BJ (cell line): ENCODE measurements at regions of chr16 and their contacts with region 1.

Region 1: GRCh38 chr16:30052671-30053372 is 12.7 kb upstream of the ALDOA start:
- DNase-seq: no peak
- H3K4me3 ChIP-seq: peak overlapping the region; percentile 89
- H3K27me3 ChIP-seq: no peaks in the 10 kb centered on the region
- CTCF ChIP-seq: no peak

Region 2: GRCh38 chr16:29757950-29758466 is 294.8 kb before region 1 on chr16:
- CTCF ChIA-PET with region 1: no interaction called
- POLR2A ChIA-PET with region 1: no interaction called
- DNase-seq: peak; percentile 13
- H3K4me3 ChIP-seq: no peak overlapping the region
- H3K27me3 ChIP-seq: no peaks in the 10 kb centered on the region; the same call in 1 of the 2 replicates
- CTCF ChIP-seq: peak; percentile 31; the same call in 1 of the 2 replicates

Region 3: DNA sequence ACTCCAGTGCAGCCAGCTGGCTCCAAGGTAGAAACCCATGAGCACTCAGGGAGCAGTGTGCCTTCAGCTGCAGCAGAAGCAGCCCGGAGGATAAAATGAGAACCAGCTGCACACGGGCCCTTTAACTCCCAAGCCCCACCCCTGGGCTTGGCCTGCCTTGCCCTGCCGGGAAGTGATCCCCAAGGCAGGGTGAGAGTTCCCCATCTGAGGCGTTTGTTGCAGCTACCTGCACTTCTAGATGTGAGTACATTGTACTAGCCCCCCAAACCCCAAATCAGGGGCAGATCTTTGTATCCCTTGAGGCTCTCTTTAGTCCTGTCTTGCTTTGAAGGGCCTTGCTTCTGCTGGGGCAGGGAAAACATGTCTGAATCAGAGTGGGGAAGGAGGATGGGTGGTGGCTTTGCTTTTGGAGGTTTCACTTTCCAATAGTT is 232.5 kb before region 1 on chr16 and contains the start of gene MVP:
- CTCF ChIA-PET with region 1: no interaction called
- POLR2A ChIA-PET with region 1: no interaction called
- DNase-seq: no peak
- H3K4me3 ChIP-seq: peak within 1 kb of the TSS; percentile 80
- H3K27me3 ChIP-seq: no peaks in the 10 kb centered on the region
- CTCF ChIP-seq: no peak
- polyA plus RNA-seq, gene MVP: 219 and 368 TPM in 2 replicates

Region 4: DNA sequence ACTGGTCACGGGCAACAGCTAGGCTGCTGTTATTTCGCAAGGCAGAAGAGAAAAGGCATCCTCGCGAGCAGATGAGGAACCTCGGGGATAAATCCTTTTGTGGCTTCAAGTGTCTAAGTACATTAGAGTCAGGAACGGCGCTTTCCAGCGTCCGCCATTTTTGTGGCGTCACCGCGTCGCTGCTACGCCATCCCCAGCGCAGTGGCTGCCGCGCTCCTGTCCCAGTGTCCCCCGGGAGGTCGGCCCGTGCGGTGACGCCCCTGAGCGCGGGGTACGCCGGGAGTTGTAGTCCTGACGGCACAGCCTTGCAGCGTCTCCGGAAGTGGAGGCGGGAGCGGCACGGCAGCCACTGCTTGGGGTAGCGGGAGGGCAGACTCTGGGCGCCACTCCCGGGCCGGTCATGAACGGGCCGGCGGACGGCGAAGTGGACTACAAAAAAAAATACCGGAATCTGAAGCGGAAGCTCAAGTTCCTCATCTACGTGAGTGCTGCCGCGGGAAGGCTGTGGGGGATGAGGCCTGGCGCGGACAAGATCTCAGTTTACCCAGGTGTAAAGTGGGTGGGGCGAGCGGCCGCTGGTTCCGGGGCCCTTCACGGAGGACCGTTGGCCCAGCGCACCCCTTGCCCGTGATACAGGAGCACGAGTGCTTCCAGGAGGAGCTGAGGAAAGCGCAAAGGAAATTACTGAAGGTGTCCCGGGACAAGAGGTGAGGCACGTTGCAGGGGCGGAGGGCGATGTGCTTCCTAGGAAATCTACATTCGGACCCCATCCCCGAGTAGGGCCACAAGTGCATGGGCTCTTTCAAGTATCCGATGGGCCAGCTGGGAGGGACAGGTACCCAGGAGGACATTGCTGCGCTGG is 56.7 kb before region 1 on chr16 and contains the start of gene INO80E:
- CTCF ChIA-PET with region 1: no interaction called
- POLR2A ChIA-PET with region 1: no interaction called
- DNase-seq: peak; percentile 76
- H3K4me3 ChIP-seq: peak within 1 kb of the TSS; percentile 90
- H3K27me3 ChIP-seq: no peaks in the 10 kb centered on the region
- CTCF ChIP-seq: 0 out of 2 replicates have a peak, but pooled peaks have one; percentile 2
- polyA plus RNA-seq, gene INO80E: 34.5 and 35.6 TPM in 2 replicates

Region 5: GRCh38 chr16:30032083-30032819 is 20.6 kb before region 1 on chr16:
- CTCF ChIA-PET with region 1: interaction called, 29 read pairs
- POLR2A ChIA-PET with region 1: no interaction called
- DNase-seq: no peak
- H3K4me3 ChIP-seq: no peak overlapping the region
- H3K27me3 ChIP-seq: peaks cover 30% of the 10 kb centered on the region
- CTCF ChIP-seq: peak; percentile 83

Region 6: GRCh38 chr16:30041846-30042267 is 11.0 kb before region 1 on chr16:
- CTCF ChIA-PET with region 1: interaction called, 20 read pairs
- POLR2A ChIA-PET with region 1: no interaction called
- DNase-seq: no peak
- H3K4me3 ChIP-seq: no peak overlapping the region
- H3K27me3 ChIP-seq: no peaks in the 10 kb centered on the region; the same call in 1 of the 2 replicates
- CTCF ChIP-seq: peak; percentile 44